ENCODE measurements at regions of chr11 and their contacts with region 1.

Region 1: GRCh38 chr11:108388576-108388975 is 78.8 kb downstream of the C11orf65 start:
- DNase-seq: no peak
- ATAC-seq: no peak
- H3K4me3 ChIP-seq: no peak overlapping the region
- H3K27ac ChIP-seq: no peak overlapping the region
- H3K4me1 ChIP-seq: no peaks in the 10 kb centered on the region
- H3K27me3 ChIP-seq: no peaks in the 10 kb centered on the region
- CTCF ChIP-seq: no peak
- POLR2A ChIP-seq: no peak
- RAD21 ChIP-seq: no peak

Region 2: DNA sequence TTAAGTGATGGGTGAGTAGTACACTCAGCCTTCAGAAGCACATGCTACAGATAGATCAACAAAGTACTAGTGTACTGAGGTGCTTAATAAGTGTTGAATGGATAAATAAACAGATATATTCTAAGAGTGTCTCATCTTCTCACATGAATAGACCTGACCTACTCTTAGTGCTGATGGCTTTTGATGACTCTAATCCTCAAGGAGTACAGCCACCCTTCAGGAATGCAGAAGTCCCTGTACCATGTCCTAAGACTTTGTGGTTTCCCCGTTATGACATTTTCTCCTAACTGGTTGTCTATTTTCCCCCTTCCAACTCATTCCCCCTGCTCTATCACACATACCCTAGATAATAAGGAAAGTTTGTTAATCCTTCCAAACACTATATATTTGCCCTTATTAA is 17.1 kb after region 1 on chr11:
- CTCF ChIA-PET with region 1: no interaction called
- POLR2A ChIA-PET with region 1: no interaction called
- RAD21 ChIA-PET with region 1: no interaction called
- intact Hi-C with region 1: loop called (anchors 1 kb)
- DNase-seq: no peak
- ATAC-seq: no peak
- H3K4me3 ChIP-seq: no peak overlapping the region
- H3K27ac ChIP-seq: no peak overlapping the region
- H3K4me1 ChIP-seq: no peaks in the 10 kb centered on the region
- H3K27me3 ChIP-seq: no peaks in the 10 kb centered on the region
- CTCF ChIP-seq: no peak
- POLR2A ChIP-seq: no peak
- RAD21 ChIP-seq: no peak